ENCODE measurements at regions of chr11 and their contacts with region 1.

Region 1: GRCh38 chr11:65095974-65096806 is at the start of gene VPS51:
- DNase-seq: peak; percentile 90

Region 2: GRCh38 chr11:65111744-65112414 is 15.7 kb after region 1 on chr11 and contains the start of gene TM7SF2:
- CTCF ChIA-PET with region 1: interaction called, 20 read pairs
- POLR2A ChIA-PET with region 1: interaction called, 18 read pairs
- DNase-seq: peak; percentile 91